Right ventricle myocardium inferior (tissue), 1 donor: ENCODE measurements at regions of chr7 and their contacts with region 1.

Region 1: GRCh38 chr7:15764851-15765382 is 78.4 kb upstream of the MEOX2 start:
- DNase-seq: no peak
- ATAC-seq: no peak

Region 2: DNA sequence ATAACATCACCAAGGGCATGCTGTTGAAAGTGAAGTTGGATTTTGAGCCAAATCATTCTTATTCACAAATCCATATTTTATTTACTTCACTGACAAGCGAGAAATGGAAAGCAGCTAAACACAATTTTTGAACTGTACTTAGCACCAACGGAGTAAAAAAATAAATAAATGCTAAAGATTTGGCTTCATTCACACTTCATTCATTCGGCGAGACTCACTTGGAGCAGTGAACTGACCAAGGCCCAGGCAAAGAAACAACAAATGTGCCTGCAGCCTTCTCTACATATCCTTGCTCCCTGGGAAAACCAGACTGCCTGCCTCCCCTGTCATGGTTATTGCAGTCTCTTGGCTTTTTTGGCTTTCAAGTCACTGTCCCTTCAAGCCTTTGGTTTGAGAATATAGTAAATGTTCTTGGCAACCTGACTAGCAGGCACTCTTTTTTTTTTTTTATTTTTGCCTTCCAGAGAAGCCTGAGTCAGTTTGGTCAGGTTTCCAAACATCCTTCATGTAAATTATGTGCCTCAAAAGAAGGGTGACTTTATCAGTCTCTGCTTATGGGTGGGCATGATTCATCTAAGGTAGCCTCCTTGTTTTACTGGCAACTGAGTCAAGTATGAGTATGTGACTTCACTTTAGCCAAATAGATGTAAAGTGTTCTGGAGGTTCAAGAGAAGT is 99.2 kb after region 1 on chr7:
- intact Hi-C with region 1: no loop called
- DNase-seq: no peak
- ATAC-seq: no peak

Region 3: DNA sequence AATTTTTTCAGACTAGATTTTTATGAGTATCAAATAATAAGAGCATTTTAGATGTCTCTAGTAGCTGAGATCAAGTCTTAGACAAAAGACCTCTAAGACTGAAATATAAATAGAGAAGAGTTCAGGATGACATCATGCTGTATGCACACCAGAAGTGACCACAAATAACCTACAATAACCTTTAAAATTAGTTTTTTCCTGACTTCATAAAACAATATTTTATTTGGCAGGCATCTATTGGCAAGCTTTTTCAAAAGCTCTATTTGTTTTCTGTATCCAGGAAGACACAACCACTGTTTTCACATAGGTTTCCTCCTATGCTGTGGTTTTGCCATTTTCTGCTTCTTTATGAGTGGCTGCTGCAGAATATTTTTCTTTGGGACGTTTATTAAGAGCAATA is 297.4 kb after region 1 on chr7:
- intact Hi-C with region 1: loop called (anchors 10 kb)
- DNase-seq: no peak
- ATAC-seq: peak; percentile 57